AG04449 (cell line): ENCODE measurements at regions of chr6 and their contacts with region 1.

Region 1: DNA sequence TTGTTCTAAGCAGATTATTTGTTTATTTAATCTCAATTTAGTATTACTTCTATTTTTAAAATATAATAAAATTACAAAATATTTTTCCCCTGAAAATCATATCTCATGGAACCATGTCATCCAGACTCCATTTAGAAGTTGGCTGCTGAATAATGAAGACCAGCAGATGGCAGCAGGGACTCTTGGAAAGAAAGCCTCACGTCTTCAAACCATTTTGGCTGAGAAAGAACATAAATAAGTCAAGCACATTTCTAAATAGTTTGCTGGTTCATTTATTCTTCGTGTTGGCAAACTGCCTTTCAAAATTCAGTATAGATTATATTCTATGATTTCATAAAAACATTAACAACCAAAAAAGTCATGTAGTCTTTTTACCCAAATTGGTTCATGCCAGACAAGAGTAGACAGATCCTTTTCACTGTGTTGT is 71.7 kb downstream of the RCAN2 start:
- DNase-seq: no peak
- H3K4me3 ChIP-seq: no peak overlapping the region
- CTCF ChIP-seq: peak; percentile 60

Region 2: GRCh38 chr6:46491628-46492547 is 72.3 kb after region 1 on chr6:
- CTCF ChIA-PET with region 1: interaction called, 15 read pairs
- POLR2A ChIA-PET with region 1: no interaction called
- DNase-seq: no peak
- H3K4me3 ChIP-seq: peak overlapping the region; percentile 61
- CTCF ChIP-seq: peak; percentile 74